ENCODE measurements at regions of chrX and their contacts with region 1.

Region 1: DNA sequence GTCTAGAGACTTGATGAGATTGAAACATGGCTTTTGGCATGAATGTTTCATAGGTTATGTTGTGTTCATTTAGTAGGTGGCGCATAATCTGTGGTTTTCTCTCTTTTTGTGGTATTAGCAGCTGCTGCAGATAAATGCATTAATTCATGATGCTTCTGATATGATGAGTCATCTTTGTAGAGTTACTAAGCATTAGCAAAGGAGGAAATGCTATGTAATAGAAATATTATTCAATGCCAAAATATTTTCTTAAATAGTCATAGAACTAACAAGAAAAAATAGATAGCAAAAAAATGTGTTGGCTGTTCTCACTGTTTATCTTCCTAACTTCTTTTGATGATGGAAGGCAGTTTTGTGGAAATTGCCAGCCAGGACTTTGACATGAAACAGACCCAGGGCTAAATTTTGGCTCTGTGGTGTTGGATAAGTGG is 3.6 kb downstream of the ZXDB start:
- DNase-seq: no peak
- H3K4me3 ChIP-seq: peak overlapping the region; percentile 20
- H3K4me1 ChIP-seq: peaks cover 26% of the 10 kb centered on the region
- H3K27me3 ChIP-seq: no peaks in the 10 kb centered on the region

Region 2: GRCh38 chrX:57772637-57773036 is 177.2 kb after region 1 on chrX:
- in situ Hi-C with region 1: loop called (anchors 25 kb)
- DNase-seq: peak; percentile 8 to 17
- H3K4me3 ChIP-seq: no peak overlapping the region
- H3K4me1 ChIP-seq: no peaks in the 10 kb centered on the region
- H3K27me3 ChIP-seq: no peaks in the 10 kb centered on the region

Region 3: DNA sequence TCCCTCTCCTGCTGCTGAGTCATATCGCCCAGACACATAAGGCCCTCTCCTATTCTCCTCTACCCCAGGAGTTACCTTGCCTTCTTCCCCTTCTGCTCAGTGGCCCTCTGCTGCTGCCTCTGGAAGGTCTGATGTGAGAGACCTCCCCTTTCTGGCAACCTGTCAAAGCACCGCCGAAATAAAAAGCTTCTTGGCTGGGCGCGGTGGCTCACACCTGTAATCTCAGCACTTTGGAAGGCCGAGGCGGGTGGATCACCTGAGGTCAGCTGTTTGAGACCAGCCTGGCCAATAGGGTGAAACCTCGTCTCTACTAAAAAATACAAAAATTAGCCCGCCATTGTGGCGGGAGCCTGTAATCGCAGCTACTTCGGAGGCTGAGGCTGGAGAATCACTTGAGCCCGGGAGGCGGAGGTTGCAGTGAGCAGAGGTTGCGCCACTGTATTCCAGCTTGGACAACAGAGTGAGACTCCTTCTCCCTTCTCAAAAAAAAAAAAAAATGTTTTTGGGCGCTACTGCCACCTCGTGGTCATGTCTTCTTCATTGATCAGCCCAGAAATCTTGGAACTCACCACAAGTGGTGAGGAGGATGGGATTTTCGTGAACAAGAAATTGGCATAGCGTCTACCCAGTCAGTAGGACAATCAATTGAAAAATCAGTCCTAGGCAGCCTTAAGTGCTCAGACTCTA is 323.5 kb after region 1 on chrX:
- in situ Hi-C with region 1: loop called (anchors 25 kb)
- DNase-seq: peak; percentile 15 to 62
- H3K4me3 ChIP-seq: no peak overlapping the region
- H3K4me1 ChIP-seq: no peaks in the 10 kb centered on the region
- H3K27me3 ChIP-seq: no peaks in the 10 kb centered on the region; the same call in 1 of the 2 replicates